KBM-7 (cell line): ENCODE measurements at regions of chr16 and their contacts with region 1.

Region 1: DNA sequence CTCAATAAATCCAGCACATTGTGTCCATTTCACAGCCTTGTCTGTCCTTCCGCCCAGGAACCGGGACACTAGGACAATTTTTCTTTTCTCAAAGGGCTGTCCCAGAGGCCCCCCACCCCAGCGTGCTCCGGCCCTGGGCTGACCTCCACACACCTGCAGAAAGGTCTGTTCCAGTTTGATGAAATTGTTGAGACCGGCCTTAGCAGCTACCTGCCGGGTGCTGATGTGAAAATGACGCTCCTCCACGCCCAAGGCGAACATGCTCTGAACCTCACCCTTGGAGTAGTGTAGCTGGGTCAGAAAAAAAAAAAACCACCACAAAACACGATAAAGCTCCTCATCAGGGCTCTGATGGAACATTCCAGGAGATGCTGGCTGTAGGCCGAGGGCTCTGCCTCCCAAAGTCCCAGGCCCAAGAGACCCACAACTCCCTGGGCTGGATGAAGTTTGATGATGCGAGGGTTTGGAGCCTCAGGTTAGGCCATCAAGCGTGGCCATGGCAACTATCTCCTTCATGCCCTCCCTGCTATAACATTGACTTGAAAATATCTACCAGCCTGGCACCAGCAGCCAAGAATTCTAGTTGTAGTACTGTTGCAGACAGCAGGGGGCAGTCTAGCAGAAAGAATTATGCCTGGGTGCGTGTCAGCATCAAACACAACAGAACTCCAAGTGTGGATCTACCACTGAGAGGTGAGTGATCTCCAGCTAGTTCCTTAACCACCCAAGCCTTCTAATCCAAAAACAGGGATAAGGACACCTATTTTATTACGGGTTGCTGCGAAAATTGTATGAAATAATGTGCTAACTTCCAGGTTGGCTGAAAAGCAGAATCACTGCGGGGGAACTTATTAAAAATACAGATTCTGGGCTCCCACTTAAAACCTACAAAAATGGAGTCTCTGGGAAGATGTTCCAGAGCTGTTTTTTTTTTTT is 62.1 kb downstream of the RMI2 start:
- DNase-seq: peak; percentile 95

Region 2: DNA sequence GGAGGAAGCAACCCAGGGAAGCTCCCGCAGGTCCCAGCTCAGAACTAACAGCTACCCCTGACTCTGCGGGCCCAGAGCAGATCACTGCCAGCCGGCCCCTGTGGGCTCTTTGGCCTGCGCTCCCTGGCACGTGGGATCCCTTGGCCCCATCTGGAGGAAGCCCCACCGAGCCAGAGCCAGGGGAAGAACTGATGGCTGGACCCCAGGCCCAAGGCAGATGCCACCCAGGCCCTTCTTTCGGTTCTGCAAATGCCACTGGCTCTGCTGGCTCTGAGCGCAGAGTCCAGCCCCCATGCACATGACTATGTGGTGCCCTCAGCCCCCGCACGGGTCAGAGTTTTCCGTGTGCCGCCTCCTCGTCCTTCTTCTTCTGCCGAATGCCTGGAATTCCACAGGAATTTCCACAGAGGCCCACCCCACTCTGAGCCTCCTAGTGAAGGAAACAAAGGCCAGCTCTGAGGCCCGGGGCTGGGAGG is 225.2 kb after region 1 on chr16:
- in situ Hi-C with region 1: no loop called
- DNase-seq: no peak

Region 3: GRCh38 chr16:11799509-11800381 is 392.4 kb after region 1 on chr16:
- in situ Hi-C with region 1: loop called (anchors 25 kb)
- DNase-seq: peak; percentile 65